Activated T-helper 1 cell treated with anti-CD3 and anti-CD28 coated beads, Interleukin-12 subunit alpha, Interleukin-12 subunit beta, Interleukin-2, Interleukin-4 antibody, amounts not matched to agents 30 ng/mL and 10 ng/mL and 1 ng/mL, durations not matched to agents 14 hours and 24 hours and 36 hours (primary cell): ENCODE measurements at regions of chr4 and their contacts with region 1.

Region 1: GRCh38 chr4:83356899-83357661 is 22.4 kb upstream of the HPSE start:
- DNase-seq: no peak
- H3K4me3 Mint-ChIP-seq: peak overlapping the region; percentile 30
- H3K27ac Mint-ChIP-seq: peak overlapping the region; percentile 96
- H3K4me1 Mint-ChIP-seq: peaks cover 15% of the 10 kb centered on the region
- H3K27me3 Mint-ChIP-seq: no peaks in the 10 kb centered on the region

Region 2: DNA sequence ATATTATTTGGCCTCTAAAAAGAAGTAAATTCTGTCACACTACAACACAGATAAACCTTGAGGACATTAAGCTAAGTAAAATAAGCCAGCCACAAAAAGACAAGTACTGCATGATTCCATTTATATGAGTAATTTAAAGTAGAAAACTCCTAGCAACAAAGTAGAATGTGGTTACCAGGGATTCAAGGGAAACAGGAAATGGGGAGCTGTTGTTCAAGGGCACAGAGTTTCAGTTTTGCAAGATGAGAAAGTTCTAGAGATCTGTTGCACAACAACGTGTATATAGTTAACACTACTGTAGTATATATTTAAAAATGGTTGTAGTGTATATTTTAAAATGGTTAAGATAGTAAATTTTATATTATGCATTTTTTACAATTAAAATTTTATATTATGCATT is 491.5 kb before region 1 on chr4:
- intact Hi-C with region 1: loop called (anchors 10 kb)
- DNase-seq: peak; percentile 24
- H3K4me3 Mint-ChIP-seq: no peak overlapping the region
- H3K27ac Mint-ChIP-seq: peak overlapping the region; percentile 91
- H3K4me1 Mint-ChIP-seq: peaks cover 48% of the 10 kb centered on the region
- H3K27me3 Mint-ChIP-seq: no peaks in the 10 kb centered on the region

Region 3: DNA sequence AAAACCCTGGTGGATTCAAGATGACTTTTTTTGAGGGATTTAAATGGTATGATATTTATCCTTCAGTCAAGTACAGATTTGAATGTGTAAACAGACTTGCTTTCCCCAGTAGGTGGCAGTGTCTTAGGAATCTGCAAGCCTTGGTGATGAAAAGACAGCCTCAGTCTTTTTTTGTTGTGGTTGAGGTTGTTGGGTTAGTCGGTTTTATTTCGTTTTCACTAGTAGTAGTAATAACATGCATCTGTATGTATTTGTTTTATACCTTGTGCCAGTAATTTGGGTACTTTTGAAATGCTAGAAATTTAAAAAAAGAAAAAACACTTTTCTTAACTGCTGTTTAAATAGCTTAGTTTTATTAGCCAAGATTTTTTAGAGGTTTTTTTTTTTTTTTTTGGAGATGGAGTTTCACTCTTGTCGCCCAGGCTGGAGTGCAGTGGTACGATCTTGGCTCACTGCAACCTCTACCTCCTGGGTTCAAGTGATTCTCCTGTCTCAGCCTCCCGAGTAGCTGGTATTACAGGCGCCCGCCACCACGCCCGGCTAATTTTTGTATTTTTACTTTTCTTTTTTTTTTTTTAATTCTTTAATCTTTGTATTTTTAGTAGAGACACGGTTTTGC is 282.9 kb before region 1 on chr4:
- intact Hi-C with region 1: loop called (anchors 1 kb)
- DNase-seq: peak; percentile 66
- H3K4me3 Mint-ChIP-seq: no peak overlapping the region
- H3K27ac Mint-ChIP-seq: peak overlapping the region; percentile 19
- H3K4me1 Mint-ChIP-seq: peaks cover 29% of the 10 kb centered on the region
- H3K27me3 Mint-ChIP-seq: no peaks in the 10 kb centered on the region

Region 4: GRCh38 chr4:83189631-83190136 is 167.4 kb before region 1 on chr4:
- intact Hi-C with region 1: no loop called
- DNase-seq: no peak
- H3K4me3 Mint-ChIP-seq: no peak overlapping the region
- H3K27ac Mint-ChIP-seq: no peak overlapping the region
- H3K4me1 Mint-ChIP-seq: no peaks in the 10 kb centered on the region
- H3K27me3 Mint-ChIP-seq: no peaks in the 10 kb centered on the region

Region 5: GRCh38 chr4:83231620-83232076 is 125.4 kb before region 1 on chr4:
- intact Hi-C with region 1: loop called (anchors 1 kb)
- DNase-seq: peak; percentile 63
- H3K4me3 Mint-ChIP-seq: peak overlapping the region; percentile 52
- H3K27ac Mint-ChIP-seq: peak overlapping the region; percentile 69
- H3K4me1 Mint-ChIP-seq: peaks cover 59% of the 10 kb centered on the region
- H3K27me3 Mint-ChIP-seq: peaks cover 11% of the 10 kb centered on the region

Region 6: GRCh38 chr4:83320548-83320947 is 36.5 kb before region 1 on chr4:
- intact Hi-C with region 1: loop called (anchors 5 kb)
- DNase-seq: no peak
- H3K4me3 Mint-ChIP-seq: no peak overlapping the region
- H3K27ac Mint-ChIP-seq: peak overlapping the region; percentile 61
- H3K4me1 Mint-ChIP-seq: peaks cover 7% of the 10 kb centered on the region
- H3K27me3 Mint-ChIP-seq: no peaks in the 10 kb centered on the region

Region 7: DNA sequence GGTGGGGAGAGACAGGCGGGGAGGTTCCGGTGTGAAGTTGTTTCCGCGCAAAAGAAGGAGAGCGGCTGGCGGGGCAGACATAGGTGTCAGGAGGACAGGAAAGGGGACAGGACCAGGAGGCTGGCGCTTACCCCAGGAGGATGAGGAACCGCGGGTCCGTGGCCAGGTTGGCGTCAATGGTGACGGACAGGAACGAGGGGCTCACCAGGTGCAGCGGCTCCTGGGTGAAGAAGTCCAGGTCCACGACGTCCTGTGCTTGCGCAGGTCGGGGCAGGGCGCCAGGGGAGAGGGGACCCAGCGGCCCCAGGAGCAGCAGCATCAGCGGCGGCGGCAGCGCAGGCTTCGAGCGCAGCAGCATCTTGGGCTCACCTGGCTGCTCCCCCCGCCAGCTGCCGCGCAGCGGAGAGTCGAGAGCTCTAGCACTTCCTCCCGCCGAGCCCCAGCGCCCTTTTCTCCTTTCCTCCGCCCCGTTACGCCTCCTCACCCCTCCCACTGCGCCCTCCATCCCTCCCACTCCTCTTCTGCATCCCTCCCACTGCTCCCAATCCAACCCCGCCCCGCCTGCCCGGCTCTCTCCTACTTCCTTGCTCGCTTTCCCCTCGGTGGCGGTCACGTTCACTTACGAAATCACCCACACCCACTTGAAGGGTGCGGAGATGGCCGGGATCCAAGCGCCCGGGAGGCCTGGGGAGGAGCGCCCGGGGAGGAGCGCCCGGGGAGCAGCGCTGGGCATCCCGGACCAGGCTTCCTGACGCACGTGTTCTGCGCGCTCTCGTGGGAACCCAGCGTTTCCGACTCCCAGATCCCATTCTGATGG is 22.4 kb before region 1 on chr4 and contains the start of gene HPSE:
- intact Hi-C with region 1: no loop called
- DNase-seq: peak; percentile 67
- H3K4me3 Mint-ChIP-seq: peak within 1 kb of the TSS; percentile 84
- H3K27ac Mint-ChIP-seq: peak within 1 kb of the TSS; percentile 64
- H3K4me1 Mint-ChIP-seq: peaks cover 40% of the 10 kb centered on the region
- H3K27me3 Mint-ChIP-seq: peaks cover 17% of the 10 kb centered on the region
- total RNA-seq, gene HPSE: 23.1 and 24.1 TPM in 2 replicates

Region 8: DNA sequence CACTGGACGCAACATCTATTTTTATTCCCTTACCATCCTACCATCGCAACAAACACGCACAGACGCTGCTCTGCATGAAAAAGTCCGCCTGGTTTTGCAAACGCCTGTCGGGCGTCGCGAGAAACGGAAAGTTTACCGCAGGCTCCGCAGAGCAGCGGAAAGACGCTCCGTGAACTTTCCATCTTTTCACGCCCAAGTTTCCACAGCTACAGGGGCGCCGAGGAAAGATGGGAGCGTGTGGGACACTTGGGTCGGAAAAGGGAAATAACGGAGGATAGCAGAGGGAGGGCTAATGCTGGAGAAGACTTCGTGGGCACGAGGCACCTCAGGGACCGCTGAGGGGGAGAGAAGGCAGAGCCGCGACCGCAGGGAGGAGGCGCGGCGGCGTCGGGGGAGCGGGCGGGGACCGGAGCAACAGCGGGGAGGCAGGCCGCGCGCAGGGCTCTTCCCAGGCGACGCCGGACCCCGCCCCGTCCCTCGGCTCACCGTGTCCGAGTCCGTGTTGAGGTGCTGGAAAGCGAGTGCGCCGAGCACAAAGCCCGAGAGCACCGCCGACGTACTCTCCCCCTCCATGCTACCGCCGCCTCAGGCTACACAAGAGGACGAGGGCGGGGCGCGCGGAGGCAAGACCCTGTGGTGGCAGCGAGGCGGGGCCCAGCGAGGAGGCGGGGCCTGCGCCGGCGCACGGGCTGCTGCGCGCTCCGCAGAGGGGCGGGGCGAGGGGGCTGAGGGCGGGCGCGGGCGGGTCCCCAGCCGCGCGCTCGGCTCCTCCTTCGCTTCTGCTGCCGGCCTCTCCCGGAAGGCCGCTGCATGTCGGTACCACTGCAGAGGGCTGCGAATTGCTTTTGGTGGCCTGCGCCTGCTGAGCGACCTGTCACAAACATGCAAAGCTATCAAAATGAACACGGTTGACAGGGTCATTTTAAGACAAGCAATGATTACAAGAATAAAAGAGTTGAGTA is 127.7 kb after region 1 on chr4 and contains the start of gene ABRAXAS1:
- intact Hi-C with region 1: loop called (anchors 2 kb)
- DNase-seq: peak; percentile 91
- H3K4me3 Mint-ChIP-seq: peak within 1 kb of the TSS; percentile 90
- H3K27ac Mint-ChIP-seq: peak within 1 kb of the TSS; percentile 95
- H3K4me1 Mint-ChIP-seq: peaks cover 10% of the 10 kb centered on the region
- H3K27me3 Mint-ChIP-seq: peaks cover under 1% of the 10 kb centered on the region
- total RNA-seq, gene ABRAXAS1: 11.0 and 11.3 TPM in 2 replicates

Region 9: DNA sequence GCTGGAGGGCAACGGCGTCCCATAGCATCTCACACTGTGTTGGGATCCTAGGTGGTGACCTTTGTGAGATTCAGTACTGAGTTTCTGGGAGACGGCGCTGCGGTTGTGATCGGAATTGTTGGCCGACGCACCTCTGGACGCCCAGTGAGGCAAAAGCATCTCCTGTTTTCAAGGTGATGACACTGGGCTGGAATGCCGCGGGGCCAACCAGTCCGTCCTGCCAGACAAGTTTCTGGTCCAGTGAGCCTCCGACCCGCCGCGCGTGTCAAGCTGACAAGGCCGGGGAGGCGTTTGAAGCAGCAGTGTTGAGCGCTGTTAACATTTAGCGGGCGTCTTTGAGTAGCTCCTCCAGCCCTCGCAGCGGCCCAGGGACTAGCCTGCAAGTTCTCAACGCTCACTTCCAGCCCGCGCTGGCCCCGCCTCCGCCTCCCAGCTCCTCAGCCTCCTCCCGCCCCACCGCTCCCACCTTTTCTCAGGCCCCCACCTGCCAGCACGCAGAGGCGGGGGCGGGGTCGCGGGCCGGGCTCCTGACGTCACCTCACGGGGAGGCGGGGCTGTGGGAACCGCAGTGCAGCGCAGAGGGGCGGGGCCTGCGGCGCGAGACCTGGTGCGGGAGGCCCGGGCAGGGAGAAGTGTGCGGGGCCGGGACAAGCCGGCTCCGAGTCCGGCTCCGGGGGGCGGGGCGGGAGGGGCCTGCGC is 1225.4 kb after region 1 on chr4:
- intact Hi-C with region 1: loop called (anchors 2 kb)
- DNase-seq: peak; percentile 83
- H3K4me3 Mint-ChIP-seq: peak overlapping the region; percentile 72
- H3K27ac Mint-ChIP-seq: no peak overlapping the region
- H3K4me1 Mint-ChIP-seq: peaks cover 14% of the 10 kb centered on the region
- H3K27me3 Mint-ChIP-seq: peaks cover 53% of the 10 kb centered on the region